Ascending aorta (tissue), 2 donors: ENCODE measurements at regions of chr19 and their contacts with region 1.

Region 1: GRCh38 chr19:55461259-55461973 is at the start of gene ISOC2:
- DNase-seq: peak; percentile 100
- H3K4me3 ChIP-seq: peak within 1 kb of the TSS; percentile 58 to 77
- H3K27ac ChIP-seq: peak within 1 kb of the TSS; percentile 67 to 79
- H3K4me1 ChIP-seq: peaks cover 0 to 5% of the 10 kb centered on the region in 2 donors
- H3K27me3 ChIP-seq: no peaks in the 10 kb centered on the region
- CTCF ChIP-seq: no peak
- total RNA-seq, gene ISOC2: 96.7 TPM

Region 2: GRCh38 chr19:55279770-55280643 is 181.4 kb before region 1 on chr19 and contains the start of gene HSPBP1:
- intact Hi-C with region 1: loop called (anchors 5 kb)
- DNase-seq: peak; percentile 85 to 97
- H3K4me3 ChIP-seq: peak within 1 kb of the TSS; percentile 71 to 84
- H3K27ac ChIP-seq: peak within 1 kb of the TSS; percentile 66 to 68
- H3K4me1 ChIP-seq: peaks cover 11 to 16% of the 10 kb centered on the region in 2 donors
- H3K27me3 ChIP-seq: no peaks in the 10 kb centered on the region
- CTCF ChIP-seq: no peak
- total RNA-seq, gene HSPBP1: 72.7 TPM

Region 3: DNA sequence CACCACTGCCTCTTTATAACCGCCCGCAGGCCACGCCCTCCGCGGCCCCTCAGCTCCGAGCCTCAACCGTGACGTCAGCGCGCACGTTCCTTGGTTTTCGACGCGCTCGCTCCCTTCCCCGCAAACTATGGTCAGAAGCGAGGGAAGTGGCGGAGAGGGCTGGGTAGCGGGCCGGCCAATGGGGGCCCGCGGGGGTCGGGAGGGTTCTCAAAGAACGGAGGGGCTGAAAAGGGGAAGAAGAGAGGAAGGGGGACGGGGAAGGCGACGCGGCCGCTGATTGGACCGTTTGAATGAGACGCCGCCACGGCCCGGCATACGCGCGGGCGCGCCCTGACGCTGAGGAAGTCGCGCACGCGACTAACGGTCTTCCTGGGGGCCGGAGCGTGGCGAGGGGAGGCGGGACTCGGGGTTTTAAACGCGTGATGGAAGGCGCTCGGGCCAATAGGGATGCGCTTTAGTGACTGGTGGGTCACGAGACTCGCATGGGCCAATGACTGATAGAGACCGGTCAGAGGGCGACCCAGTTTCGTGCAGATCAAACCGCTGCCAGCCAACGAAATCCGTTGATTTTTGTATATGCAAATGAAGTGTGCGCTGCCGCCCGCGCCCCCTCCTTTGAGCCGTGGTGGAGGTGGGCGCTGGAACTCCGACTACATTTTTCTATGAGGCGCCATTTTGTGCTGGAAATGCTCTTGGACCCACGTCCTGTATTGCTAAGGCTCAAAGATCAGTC is 53.5 kb before region 1 on chr19:
- intact Hi-C with region 1: loop called (anchors 1 kb)
- DNase-seq: peak; percentile 95 to 99
- H3K4me3 ChIP-seq: peak overlapping the region; percentile 86 to 92
- H3K27ac ChIP-seq: peak overlapping the region; percentile 96 to 99
- H3K4me1 ChIP-seq: peaks cover 11 to 13% of the 10 kb centered on the region in 2 donors
- H3K27me3 ChIP-seq: no peaks in the 10 kb centered on the region
- CTCF ChIP-seq: no peak

Region 4: DNA sequence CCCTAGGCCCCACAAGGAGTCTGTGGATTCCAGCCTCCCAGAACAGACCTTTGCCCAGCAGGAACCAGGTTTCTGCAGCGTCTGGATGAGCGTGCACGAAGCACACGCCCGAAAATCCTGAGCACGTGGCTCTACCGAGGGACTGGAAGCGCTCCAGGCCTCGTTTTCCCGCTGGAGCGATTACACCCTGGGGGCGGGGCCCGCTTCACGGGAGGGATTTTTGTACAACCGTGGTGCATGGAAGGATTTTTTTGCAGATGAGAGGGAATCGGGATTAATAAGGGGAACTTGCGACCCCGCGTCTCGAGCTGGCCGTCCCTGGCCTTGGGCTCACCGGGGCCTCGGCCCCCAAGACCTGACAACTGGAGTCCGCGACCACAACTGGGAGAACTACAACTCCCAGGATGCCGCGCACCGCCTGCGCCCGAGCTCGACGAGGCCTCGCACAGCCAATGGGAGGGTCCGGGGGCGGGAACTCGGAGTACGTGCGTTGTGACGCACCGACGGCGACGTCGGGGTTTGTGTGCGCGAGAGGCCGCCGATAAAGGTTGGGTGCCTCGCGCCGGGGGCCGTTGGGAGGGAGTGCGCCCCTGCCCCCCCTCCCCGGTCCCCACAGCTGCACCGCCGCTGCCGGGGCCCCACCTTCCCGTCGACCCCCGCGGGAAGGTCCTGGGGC is 14.8 kb after region 1 on chr19 and contains the start of gene ZNF628:
- intact Hi-C with region 1: loop called (anchors 1 kb)
- DNase-seq: peak; percentile 93 to 99
- H3K4me3 ChIP-seq: peak within 1 kb of the TSS; percentile 82 to 84
- H3K27ac ChIP-seq: peak within 1 kb of the TSS; percentile 95 to 99
- H3K4me1 ChIP-seq: peaks cover 8 to 11% of the 10 kb centered on the region in 2 donors
- H3K27me3 ChIP-seq: no peaks in the 10 kb centered on the region
- CTCF ChIP-seq: no peak
- total RNA-seq, gene ZNF628: 13.2 TPM

Region 5: DNA sequence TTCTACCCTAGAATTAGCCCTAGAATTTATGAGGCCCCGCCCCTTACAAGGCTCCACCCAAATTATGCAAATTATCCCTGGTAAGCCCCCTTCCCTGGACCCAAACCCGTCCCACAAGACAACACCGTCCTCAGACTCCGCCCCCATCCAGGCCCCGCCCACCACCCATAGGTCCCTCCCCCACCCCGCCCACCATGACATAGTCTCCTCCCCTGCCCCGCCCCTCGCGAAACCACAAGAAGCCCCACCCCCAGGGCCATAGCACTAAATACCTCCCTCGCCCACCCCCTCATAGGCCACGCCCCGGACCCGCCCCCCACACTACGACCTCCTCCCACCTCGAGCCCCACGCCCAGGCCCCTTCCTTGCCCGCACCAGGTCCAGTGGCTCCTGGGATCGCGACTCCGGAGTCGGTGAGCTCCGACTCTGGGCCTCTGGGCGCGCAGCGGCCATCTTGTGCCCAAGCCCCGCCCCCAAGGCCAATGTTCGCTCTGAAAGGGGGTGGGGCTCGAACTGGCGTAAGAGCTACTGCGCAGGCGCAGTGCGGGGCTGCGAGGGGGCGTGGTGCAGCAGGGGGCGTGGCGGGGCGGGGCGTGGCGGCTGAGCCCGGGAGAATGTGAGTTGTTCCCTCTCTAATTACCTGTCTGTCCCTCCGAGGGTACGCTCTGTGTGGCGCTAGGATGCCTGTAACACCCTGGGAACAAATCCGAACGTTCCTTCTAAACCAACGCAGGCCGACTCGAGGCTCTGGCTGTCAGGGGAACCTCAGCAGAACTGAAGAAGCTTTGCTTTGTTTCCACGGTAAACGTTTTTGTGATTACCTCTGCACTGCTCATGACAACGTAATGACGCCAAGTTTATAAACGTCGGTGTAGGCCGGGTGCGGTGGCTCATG is 162.9 kb after region 1 on chr19 and contains the start of gene ZNF784:
- intact Hi-C with region 1: loop called (anchors 5 kb)
- DNase-seq: peak; percentile 67 to 95
- H3K4me3 ChIP-seq: peak within 1 kb of the TSS; percentile 60 to 73
- H3K27ac ChIP-seq: peak within 1 kb of the TSS; percentile 96 to 97
- H3K4me1 ChIP-seq: peaks cover 0 to 5% of the 10 kb centered on the region in 2 donors
- H3K27me3 ChIP-seq: no peaks in the 10 kb centered on the region
- CTCF ChIP-seq: no peak
- total RNA-seq, gene ZNF784: 14.7 TPM